ENCODE measurements at regions of chr13 and their contacts with region 1.

Region 1: DNA sequence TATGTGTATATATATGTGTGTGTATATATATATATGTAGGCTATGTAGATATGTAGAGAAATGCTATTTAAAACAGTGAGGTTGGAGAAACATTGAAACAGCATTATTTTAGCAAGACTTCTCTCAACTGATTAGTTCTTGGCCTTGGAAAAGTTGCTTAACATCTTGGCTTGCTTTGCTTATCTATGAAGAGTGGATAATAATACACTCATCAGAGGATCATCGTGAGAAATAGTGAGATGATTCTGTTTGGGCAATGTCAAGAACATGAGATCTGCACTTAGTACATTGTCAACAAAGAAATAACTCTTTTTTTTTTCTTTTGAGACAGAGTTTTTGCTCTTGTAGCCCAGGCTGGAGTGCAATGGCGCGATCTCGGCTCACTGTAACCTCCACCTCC is 128.3 kb downstream of the KLF5 start:
- DNase-seq: no peak
- H3K4me3 ChIP-seq: no peak overlapping the region
- H3K27ac ChIP-seq: no peak overlapping the region
- H3K4me1 ChIP-seq: no peaks in the 10 kb centered on the region
- H3K27me3 ChIP-seq: no peaks in the 10 kb centered on the region
- CTCF ChIP-seq: no peak

Region 2: GRCh38 chr13:73218181-73218580 is 31.1 kb after region 1 on chr13:
- intact Hi-C with region 1: loop called (anchors 2 kb)
- DNase-seq: no peak
- H3K4me3 ChIP-seq: no peak overlapping the region
- H3K27ac ChIP-seq: no peak overlapping the region
- H3K4me1 ChIP-seq: peaks cover 0 to 14% (median 2%) of the 10 kb centered on the region in 4 donors
- H3K27me3 ChIP-seq: no peaks in the 10 kb centered on the region
- CTCF ChIP-seq: no peak

Measured in tibial artery (tissue), 4 donors.